Left ventricle myocardium superior (tissue), 1 donor: ENCODE measurements at regions of chr20 and their contacts with region 1.

Region 1: DNA sequence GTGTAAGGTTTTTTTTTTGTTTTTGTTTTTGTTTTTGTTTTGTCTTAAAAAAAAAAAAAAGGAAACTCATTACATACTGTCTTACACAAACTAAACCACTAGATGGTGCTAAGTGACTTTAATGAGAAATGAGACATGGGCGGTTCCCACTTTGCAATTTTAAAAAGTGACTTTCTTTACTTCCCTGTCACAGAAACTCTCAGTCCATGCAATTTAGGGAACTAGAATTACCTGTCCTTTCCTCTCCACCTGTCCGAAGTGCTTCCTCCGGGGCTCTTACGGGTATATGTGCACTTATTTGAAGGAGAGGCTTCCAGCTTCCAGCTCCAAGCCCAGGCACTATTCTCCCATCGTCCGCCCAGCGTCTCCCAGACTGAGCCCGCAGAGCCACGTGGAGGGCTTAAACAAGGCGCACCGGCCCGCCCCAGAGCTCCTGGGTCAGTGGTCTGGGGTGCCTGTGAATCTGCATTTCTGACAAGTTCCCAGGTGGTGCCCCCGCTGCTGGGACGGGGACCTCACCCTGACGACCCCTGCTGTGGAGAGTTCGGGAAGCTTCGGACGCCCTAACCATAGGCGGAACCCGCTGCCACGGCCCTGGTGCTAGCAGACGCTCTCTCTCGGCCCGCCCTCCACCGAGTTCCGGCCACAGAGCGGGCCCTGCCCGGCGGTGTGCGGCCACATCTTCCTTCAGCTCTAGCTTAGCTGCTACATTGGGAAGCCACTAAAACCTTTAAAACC is 26.1 kb downstream of the BFSP1 start:
- DNase-seq: peak; percentile 78
- ATAC-seq: peak; percentile 90

Region 2: GRCh38 chr20:17898548-17898994 is 393.5 kb after region 1 on chr20:
- intact Hi-C with region 1: loop called (anchors 5 kb)
- DNase-seq: peak; percentile 62
- ATAC-seq: peak; percentile 59

Region 3: DNA sequence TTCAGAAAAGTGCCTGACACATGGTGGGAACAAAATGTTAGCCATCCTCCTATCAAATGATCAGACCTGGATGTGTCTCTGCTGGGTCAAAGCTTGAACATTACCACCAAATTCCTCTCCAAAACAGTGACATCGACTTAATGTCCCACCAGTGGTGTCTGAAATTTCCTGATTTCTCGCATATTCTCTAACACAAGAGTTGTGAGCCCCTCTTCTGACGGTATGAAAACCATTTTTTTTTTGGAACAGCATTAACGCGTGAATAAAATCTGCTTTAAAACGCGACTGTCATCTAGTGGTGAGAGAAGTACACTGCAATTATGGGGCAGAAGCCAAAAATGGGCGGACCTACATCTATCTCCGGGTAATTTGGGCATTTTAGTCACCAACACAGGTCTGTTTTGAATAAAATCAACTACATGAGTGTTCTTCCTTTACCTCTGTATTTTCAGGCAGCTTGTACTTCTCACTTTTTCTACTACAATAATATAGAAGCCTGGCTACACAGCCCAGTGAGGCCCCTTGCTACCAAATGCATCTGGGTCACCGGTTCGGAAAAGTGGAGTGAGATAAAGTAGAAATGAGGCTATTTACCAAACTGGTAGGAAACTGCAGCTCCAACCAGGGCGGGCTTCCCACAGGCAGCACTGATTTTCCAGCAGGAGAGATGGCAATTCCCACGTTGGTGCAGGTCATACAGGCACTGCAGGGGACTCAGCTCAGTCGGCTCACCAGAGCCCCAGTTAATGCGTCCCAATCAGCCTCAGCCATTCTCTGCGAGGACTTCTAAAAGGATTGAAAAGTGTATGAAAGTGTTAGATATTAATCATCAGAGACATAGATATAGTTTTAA is 491.1 kb after region 1 on chr20:
- intact Hi-C with region 1: loop called (anchors 10 kb)
- DNase-seq: no peak
- ATAC-seq: peak; percentile 71